ENCODE measurements at regions of chr3 and their contacts with region 1.

Region 1: GRCh38 chr3:14902719-14903118 is 44.7 kb upstream of the NR2C2 start:
- DNase-seq: peak; percentile 76 to 87 (median 82)
- H3K4me3 ChIP-seq: no peak overlapping the region
- H3K27ac ChIP-seq: no peak overlapping the region
- H3K4me1 ChIP-seq: peaks cover 2% of the 10 kb centered on the region
- H3K27me3 ChIP-seq: no peaks in the 10 kb centered on the region
- CTCF ChIP-seq: no peak
- EP300 ChIP-seq: no peak
- POLR2A ChIP-seq: no peak

Region 2: GRCh38 chr3:13901935-13902584 is 1000.7 kb before region 1 on chr3:
- intact Hi-C with region 1: loop called in 1 of 4 experiments (anchors 10 kb)
- DNase-seq: no peak
- H3K4me3 ChIP-seq: no peak overlapping the region
- H3K27ac ChIP-seq: no peak overlapping the region
- H3K4me1 ChIP-seq: no peaks in the 10 kb centered on the region
- H3K27me3 ChIP-seq: peaks cover 4% of the 10 kb centered on the region
- CTCF ChIP-seq: no peak
- EP300 ChIP-seq: no peak
- POLR2A ChIP-seq: no peak

Measured in ovary (tissue), 10 donors.